Uterus (tissue), 4 donors: ENCODE measurements at regions of chr12 and their contacts with region 1.

Region 1: DNA sequence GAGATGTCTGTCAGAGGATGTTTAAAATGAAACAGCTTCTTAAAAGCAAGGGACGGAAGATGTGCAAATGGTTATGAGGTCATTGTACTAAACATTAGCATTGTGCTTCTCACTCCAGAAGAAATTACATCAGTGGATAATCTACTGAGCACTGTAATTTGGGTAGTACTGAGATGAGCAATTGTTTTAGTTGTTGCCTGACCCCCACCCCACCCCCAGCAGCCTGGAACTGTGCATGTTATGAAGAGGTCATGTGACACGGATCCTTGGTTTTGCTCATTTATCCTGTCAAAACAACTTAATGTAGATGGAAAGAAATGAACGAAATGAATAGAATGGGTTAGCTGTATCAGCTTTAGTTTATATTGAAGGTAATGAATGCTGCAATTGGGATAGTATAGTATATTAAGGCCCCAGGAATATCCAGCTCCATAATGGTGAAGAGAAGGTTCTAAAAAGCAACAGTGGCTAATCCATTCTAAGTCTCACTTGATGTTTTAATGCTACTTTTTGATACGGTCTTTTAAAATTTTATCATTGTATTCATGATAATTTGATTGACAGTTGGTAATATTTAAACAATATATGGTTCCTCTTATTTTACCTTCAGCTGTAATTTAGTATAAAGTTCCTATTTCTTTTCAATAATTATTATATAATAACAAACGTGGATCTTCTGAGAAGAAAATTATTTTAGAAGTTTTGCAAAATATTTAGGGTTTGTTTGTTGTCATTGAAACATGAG is 58.5 kb downstream of the WNK1 start:
- DNase-seq: no peak
- H3K4me3 ChIP-seq: no peak overlapping the region
- H3K27ac ChIP-seq: no peak overlapping the region
- H3K4me1 ChIP-seq: peaks cover 4% of the 10 kb centered on the region in 2 donors
- H3K27me3 ChIP-seq: no peaks in the 10 kb centered on the region
- CTCF ChIP-seq: no peak
- POLR2A ChIP-seq: no peak

Region 2: DNA sequence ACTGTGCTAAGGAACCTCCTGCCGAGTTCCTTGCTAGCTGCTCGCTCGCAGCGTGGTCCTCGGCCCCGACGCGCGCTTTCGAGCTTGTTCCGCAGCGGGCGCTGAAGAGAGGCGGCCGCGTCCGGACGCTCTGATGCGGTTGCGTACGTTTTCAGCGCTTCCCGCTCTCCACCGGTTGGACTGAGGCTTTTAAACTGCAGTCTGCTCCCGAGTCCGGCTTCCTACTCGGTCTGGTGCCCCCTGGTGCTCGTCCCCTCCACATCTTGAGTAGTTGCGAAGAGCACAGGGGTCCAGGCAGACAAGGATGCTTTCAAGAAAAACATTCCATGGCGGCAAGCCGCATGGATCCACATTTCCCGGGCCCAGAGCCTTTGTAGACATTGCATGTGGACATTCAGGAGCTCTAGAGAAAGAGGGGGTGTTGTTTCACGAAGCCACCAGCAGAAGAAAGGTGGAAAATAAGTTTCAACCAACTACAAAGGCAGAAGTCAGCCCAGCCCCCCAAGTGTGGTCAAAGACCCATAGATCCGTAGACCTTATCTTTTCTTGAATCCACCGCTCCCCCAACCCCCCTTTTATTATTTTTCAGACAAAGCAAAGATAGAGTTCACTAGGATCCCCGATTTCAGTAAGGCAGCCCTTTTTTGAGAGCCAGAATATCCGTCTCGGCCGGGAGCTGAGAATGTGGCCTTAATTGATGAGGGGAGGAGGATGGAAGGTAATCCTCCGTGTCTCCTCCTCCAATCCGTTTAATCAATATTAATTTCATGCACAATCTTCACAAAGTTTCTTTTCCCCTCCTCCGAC is 59.4 kb before region 1 on chr12:
- intact Hi-C with region 1: loop called (anchors 10 kb)
- DNase-seq: peak; percentile 93 to 94
- H3K4me3 ChIP-seq: peak overlapping the region; percentile 72 to 78
- H3K27ac ChIP-seq: peak overlapping the region; percentile 99
- H3K4me1 ChIP-seq: no peaks in the 10 kb centered on the region
- H3K27me3 ChIP-seq: no peaks in the 10 kb centered on the region
- CTCF ChIP-seq: peak; percentile 77 to 86 (median 79)
- POLR2A ChIP-seq: peak; percentile 40 to 64

Region 3: GRCh38 chr12:868722-869121 is 57.9 kb after region 1 on chr12:
- intact Hi-C with region 1: no loop called
- DNase-seq: no peak
- H3K4me3 ChIP-seq: no peak overlapping the region
- H3K27ac ChIP-seq: no peak overlapping the region
- H3K4me1 ChIP-seq: no peaks in the 10 kb centered on the region
- H3K27me3 ChIP-seq: no peaks in the 10 kb centered on the region
- CTCF ChIP-seq: no peak
- POLR2A ChIP-seq: no peak